ENCODE measurements at regions of chr14 and their contacts with region 1.

Region 1: GRCh38 chr14:31926123-31926522 is 151.0 kb upstream of the ARHGAP5 start:
- DNase-seq: peak in 7 of 9 donors; percentile 20 to 54 (median 44)
- ATAC-seq: peak; percentile 67
- H3K4me3 ChIP-seq: no peak overlapping the region
- H3K4me3 Mint-ChIP-seq: no peak overlapping the region
- H3K27ac ChIP-seq: no peak overlapping the region
- H3K27ac Mint-ChIP-seq: no peak overlapping the region
- H3K4me1 ChIP-seq: no peaks in the 10 kb centered on the region
- H3K4me1 Mint-ChIP-seq: peaks cover 7 to 18% (median 11%) of the 10 kb centered on the region in 7 donors
- H3K27me3 ChIP-seq: no peaks in the 10 kb centered on the region
- H3K27me3 Mint-ChIP-seq: no peaks in the 10 kb centered on the region

Region 2: DNA sequence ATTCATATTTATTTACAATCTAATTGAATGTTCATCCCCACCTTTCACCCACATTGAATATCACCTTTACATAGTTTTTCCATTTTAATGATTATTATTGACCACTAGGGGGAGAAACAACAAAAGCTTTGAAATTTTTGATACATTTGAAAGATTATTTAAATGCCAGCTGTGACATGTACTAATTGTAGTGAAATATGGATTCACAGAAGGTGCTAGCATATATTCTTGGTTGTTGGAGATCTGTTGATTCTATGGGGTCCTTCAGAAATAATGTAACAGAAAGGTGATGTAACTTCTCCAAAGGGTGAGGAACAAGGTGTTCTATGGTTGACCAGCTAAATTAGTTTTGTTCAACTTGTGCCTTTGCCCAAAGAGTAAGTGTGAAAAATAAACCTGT is 415.9 kb before region 1 on chr14:
- CTCF ChIA-PET with region 1: no interaction called
- POLR2A ChIA-PET with region 1: no interaction called
- intact Hi-C with region 1: loop called in 1 of 2 experiments (anchors 5 kb)
- DNase-seq: peak in 5 of 9 donors; percentile 7 to 19 (median 12)
- ATAC-seq: no peak
- H3K4me3 ChIP-seq: no peak overlapping the region
- H3K4me3 Mint-ChIP-seq: no peak overlapping the region
- H3K27ac ChIP-seq: no peak overlapping the region
- H3K27ac Mint-ChIP-seq: no peak overlapping the region
- H3K4me1 ChIP-seq: no peaks in the 10 kb centered on the region
- H3K4me1 Mint-ChIP-seq: no peaks in the 10 kb centered on the region
- H3K27me3 ChIP-seq: no peaks in the 10 kb centered on the region
- H3K27me3 Mint-ChIP-seq: peaks cover 0 to 4% (median 0%) of the 10 kb centered on the region in 5 donors

Region 3: DNA sequence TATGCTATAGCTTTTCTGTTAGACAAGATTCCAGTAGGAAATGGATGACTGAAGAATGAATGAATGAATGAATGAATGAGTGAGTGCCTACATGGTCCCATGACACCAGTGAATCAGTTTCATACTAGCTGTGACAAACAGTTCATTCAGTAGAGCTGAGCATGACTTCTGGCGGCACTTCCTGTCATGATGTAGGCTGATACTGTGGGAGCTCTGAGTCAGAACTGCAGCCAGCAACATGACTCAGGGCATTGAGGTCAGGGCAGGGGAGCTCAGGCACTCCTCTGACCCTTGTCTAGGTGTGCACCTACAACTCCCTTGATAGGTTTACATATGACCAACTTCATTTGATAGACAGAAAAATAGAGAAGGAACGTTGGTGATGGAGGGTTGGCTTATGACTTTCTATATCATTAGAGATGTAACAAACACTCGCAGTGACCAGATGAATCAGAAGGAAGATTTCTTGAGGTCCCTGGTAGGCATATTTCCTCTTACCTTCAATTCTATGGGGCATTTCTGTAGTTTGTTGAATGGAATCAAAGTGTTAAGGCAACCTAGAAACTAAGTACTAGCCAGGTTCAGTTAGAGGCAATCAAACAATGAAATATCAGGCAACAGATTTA is 11.7 kb after region 1 on chr14:
- CTCF ChIA-PET with region 1: interaction called, 11 read pairs
- POLR2A ChIA-PET with region 1: interaction called, 3 read pairs
- intact Hi-C with region 1: no loop called
- DNase-seq: peak in 3 of 9 donors; percentile 10 to 66 (median 27)
- ATAC-seq: peak; percentile 92
- H3K4me3 ChIP-seq: no peak overlapping the region
- H3K4me3 Mint-ChIP-seq: no peak overlapping the region
- H3K27ac ChIP-seq: no peak overlapping the region
- H3K27ac Mint-ChIP-seq: peak overlapping the region in 4 of 9 donors; percentile 40 to 65 (median 54)
- H3K4me1 ChIP-seq: no peaks in the 10 kb centered on the region
- H3K4me1 Mint-ChIP-seq: peaks cover 4 to 29% (median 10%) of the 10 kb centered on the region in 7 donors
- H3K27me3 ChIP-seq: no peaks in the 10 kb centered on the region
- H3K27me3 Mint-ChIP-seq: no peaks in the 10 kb centered on the region

Region 4: DNA sequence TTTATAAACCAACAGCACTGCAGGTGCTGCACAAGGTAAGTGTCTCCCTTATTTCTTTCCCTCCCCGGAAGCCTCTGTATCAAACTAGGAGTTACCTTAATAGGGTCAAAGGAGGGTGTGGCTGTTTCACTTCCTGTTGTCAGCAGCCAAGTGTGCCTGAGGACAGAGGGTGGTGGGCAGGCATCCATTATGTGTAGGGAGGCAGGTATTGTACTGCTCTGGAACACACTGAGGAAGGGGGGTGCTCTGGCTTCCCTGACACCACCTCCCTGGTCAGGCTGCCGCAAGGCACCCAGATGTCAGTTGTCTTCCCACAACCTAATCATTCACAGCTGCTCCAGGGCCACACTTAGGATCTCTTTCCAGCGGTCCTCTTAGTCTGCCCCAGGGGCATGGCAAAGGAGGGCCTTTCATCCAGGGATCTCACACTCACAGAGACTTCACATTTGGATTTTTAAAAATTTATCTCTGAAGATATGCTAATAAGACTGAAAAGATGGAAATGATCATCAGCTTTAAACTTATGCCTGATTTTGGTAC is 19.0 kb after region 1 on chr14:
- CTCF ChIA-PET with region 1: interaction called, 11 read pairs
- POLR2A ChIA-PET with region 1: interaction called, 4 read pairs
- intact Hi-C with region 1: loop called in 1 of 2 experiments (anchors 1 kb)
- DNase-seq: peak in 8 of 9 donors; percentile 7 to 75 (median 48)
- ATAC-seq: peak; percentile 83
- H3K4me3 ChIP-seq: peak overlapping the region; percentile 29
- H3K4me3 Mint-ChIP-seq: peak overlapping the region in 9 of 10 donors; percentile 30 to 84 (median 71)
- H3K27ac ChIP-seq: peak overlapping the region; percentile 56
- H3K27ac Mint-ChIP-seq: peak overlapping the region; percentile 62 to 94 (median 90)
- H3K4me1 ChIP-seq: peaks cover 10 to 28% of the 10 kb centered on the region in 2 donors
- H3K4me1 Mint-ChIP-seq: peaks cover 21 to 64% (median 33%) of the 10 kb centered on the region in 7 donors
- H3K27me3 ChIP-seq: no peaks in the 10 kb centered on the region
- H3K27me3 Mint-ChIP-seq: peaks cover 0 to 4% (median 0%) of the 10 kb centered on the region in 5 donors

Region 5: GRCh38 chr14:32469388-32470160 is 543.5 kb after region 1 on chr14:
- CTCF ChIA-PET with region 1: no interaction called
- POLR2A ChIA-PET with region 1: no interaction called
- intact Hi-C with region 1: loop called (anchors 1 to 5 kb)
- DNase-seq: peak in 3 of 9 donors; percentile 1 to 4 (median 3)
- ATAC-seq: no peak
- H3K4me3 ChIP-seq: no peak overlapping the region
- H3K4me3 Mint-ChIP-seq: no peak overlapping the region
- H3K27ac ChIP-seq: no peak overlapping the region
- H3K27ac Mint-ChIP-seq: no peak overlapping the region
- H3K4me1 ChIP-seq: no peaks in the 10 kb centered on the region
- H3K4me1 Mint-ChIP-seq: no peaks in the 10 kb centered on the region
- H3K27me3 ChIP-seq: no peaks in the 10 kb centered on the region
- H3K27me3 Mint-ChIP-seq: peaks cover 0 to 8% (median 0%) of the 10 kb centered on the region in 5 donors

Region 6: GRCh38 chr14:32560209-32560857 is 634.2 kb after region 1 on chr14:
- CTCF ChIA-PET with region 1: no interaction called
- POLR2A ChIA-PET with region 1: no interaction called
- intact Hi-C with region 1: loop called in 1 of 2 experiments (anchors 1 kb)
- DNase-seq: peak in 4 of 9 donors; percentile 7 to 28 (median 10)
- ATAC-seq: peak; percentile 55
- H3K4me3 ChIP-seq: no peak overlapping the region
- H3K4me3 Mint-ChIP-seq: no peak overlapping the region
- H3K27ac ChIP-seq: no peak overlapping the region
- H3K27ac Mint-ChIP-seq: no peak overlapping the region
- H3K4me1 ChIP-seq: no peaks in the 10 kb centered on the region
- H3K4me1 Mint-ChIP-seq: peaks cover 12 to 20% (median 15%) of the 10 kb centered on the region in 7 donors
- H3K27me3 ChIP-seq: no peaks in the 10 kb centered on the region
- H3K27me3 Mint-ChIP-seq: no peaks in the 10 kb centered on the region

Measured in naive thymus-derived CD4-positive, alpha-beta T cell (primary cell).